B cell (primary cell): ENCODE measurements at regions of chr12 and their contacts with region 1.

Region 1: DNA sequence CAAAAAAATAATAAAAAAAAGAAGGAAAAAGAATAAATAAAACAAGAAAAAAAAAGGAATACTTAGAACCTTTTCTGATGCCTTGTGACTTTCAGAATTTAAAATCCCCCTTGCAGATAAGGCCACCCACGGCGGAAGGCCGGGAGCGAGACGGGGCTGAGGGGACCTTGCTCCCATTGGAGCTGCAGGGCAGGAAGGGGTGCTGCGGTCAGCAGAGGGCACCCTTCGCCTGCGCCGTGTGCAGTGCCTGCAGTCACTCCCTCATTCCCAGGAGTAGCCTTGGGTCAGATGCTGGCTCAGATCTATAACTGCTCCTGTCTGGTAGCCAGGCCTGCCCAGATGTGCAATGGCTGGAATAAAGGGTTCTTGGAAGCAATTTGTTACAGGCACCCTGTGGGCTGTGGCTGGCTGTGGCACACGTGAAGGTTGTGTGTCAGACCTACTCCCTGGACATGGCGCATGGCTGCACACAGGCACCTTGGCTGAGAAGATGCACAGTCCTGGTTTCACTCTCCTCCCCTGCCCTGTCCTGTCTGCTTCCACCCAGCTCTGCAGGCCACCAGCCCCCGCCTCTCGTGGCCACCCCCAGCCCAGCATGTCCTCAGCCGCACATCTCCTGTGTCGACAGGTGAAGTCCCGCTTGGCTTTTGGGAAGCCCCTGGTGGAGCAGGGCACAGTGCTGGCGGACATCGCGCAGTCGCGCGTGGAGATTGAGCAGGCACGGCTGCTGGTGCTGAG is 13.4 kb upstream of the ALDH2 start:
- DNase-seq: peak; percentile 54
- ATAC-seq: peak; percentile 35
- H3K4me3 ChIP-seq: no peak overlapping the region
- H3K4me3 Mint-ChIP-seq: no peak overlapping the region
- H3K27ac ChIP-seq: no peak overlapping the region
- H3K27ac Mint-ChIP-seq: no peak overlapping the region
- H3K4me1 ChIP-seq: peaks cover 11% of the 10 kb centered on the region in 2 donors
- H3K4me1 Mint-ChIP-seq: peaks cover 13% of the 10 kb centered on the region
- H3K27me3 ChIP-seq: no peaks in the 10 kb centered on the region
- H3K27me3 Mint-ChIP-seq: no peaks in the 10 kb centered on the region
- CTCF ChIP-seq: peak; percentile 64

Region 2: DNA sequence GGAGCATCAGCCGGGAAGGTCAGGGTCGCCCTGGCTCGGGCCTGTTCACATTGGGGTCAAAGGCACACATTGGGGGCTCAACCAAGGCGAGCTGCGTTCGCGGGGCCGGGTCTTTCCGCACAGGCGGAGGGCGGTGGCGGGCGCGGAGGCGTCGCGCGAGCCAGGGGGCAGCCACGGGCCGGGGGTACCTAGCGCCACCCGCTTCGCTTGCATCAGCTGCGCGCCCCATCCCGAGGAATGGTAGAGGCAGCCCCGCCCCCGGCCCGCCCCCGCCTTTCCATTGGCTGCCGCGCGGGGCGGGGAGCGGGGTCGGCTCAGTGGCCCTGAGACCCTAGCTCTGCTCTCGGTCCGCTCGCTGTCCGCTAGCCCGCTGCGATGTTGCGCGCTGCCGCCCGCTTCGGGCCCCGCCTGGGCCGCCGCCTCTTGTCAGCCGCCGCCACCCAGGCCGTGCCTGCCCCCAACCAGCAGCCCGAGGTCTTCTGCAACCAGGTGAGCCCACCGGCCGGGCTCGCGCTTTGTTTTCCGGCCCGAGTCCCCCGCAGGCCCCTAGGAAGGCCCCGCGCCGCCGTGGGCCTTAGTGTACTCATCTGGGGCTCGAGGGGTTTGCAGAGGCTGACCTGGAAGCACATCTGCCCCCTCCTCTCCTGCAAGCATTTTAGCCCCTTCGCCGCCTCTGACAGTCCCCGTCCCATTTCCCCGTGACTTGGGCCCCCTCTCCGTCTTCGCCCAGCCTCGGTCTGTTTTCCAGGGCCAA is 13.5 kb after region 1 on chr12 and contains the start of gene ALDH2:
- CTCF ChIA-PET with region 1: interaction called, 56 read pairs
- POLR2A ChIA-PET with region 1: interaction called, 5 read pairs
- intact Hi-C with region 1: no loop called
- DNase-seq: peak; percentile 68
- ATAC-seq: peak; percentile 79
- H3K4me3 ChIP-seq: peak within 1 kb of the TSS; percentile 2 to 74 (median 62)
- H3K4me3 Mint-ChIP-seq: peak within 1 kb of the TSS; percentile 78
- H3K27ac ChIP-seq: peak within 1 kb of the TSS in 1 of 2 donors; percentile 55
- H3K27ac Mint-ChIP-seq: peak within 1 kb of the TSS; percentile 71
- H3K4me1 ChIP-seq: peaks cover 47 to 53% of the 10 kb centered on the region in 2 donors
- H3K4me1 Mint-ChIP-seq: peaks cover 57% of the 10 kb centered on the region
- H3K27me3 ChIP-seq: no peaks in the 10 kb centered on the region
- H3K27me3 Mint-ChIP-seq: no peaks in the 10 kb centered on the region
- CTCF ChIP-seq: no peak
- total RNA-seq, gene ALDH2: 22.3 TPM in 2 replicates

Region 3: DNA sequence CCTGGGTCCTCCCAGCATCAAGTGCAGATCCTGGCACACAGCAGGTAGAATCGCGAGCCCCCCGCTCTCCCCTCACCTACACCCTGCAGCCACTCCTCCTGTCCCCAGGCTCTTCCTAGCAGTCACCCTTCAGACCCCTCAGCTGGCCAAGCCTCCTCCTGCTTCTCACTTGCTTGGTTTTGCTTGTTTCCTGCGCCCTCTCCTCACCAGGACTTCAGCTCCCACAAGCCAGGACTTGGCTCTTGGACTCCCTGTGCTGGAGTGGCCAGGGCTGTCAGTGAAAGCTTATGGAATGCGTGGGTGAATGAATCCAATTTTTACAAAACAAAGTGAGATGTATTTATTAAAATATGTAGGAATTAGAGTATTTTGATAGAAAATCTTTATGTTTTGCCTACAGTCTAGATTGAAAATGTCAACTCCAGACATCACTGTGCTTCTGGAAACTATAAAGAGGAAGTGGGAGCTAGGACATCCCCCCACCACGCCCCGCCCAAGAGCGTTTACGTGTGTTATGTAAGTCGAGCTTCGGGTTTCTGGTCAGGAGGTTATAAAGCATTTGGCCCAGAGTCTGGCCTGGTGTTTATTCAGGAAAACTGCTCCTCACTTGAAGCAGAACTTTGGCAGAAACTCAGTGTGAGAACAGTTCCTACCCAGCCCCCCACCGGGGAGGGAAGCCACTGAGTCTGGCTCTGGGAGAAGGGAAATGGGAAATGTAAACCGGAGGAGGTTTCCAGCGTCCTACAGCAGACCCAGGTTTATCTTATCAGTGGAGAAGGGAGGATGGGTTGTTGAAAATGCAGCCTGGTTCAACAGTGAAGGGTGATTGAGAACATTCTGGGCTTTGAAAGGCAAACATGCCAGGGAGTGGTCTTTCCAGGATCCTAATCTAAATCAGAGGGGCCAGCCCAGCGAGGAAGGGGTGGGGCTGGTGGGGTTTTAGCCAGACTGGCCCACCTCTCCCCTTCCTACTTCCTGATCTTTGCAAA is 22.2 kb after region 1 on chr12:
- CTCF ChIA-PET with region 1: interaction called, 29 read pairs
- POLR2A ChIA-PET with region 1: interaction called, 5 read pairs
- intact Hi-C with region 1: no loop called
- DNase-seq: peak; percentile 92
- ATAC-seq: peak; percentile 93
- H3K4me3 ChIP-seq: peak overlapping the region in 4 of 5 experiments; percentile 3 to 48 (median 26)
- H3K4me3 Mint-ChIP-seq: peak overlapping the region; percentile 80
- H3K27ac ChIP-seq: peak overlapping the region; percentile 94 to 97
- H3K27ac Mint-ChIP-seq: peak overlapping the region; percentile 98
- H3K4me1 ChIP-seq: peaks cover 31 to 32% of the 10 kb centered on the region in 2 donors
- H3K4me1 Mint-ChIP-seq: peaks cover 36% of the 10 kb centered on the region
- H3K27me3 ChIP-seq: no peaks in the 10 kb centered on the region
- H3K27me3 Mint-ChIP-seq: no peaks in the 10 kb centered on the region
- CTCF ChIP-seq: no peak

Region 4: DNA sequence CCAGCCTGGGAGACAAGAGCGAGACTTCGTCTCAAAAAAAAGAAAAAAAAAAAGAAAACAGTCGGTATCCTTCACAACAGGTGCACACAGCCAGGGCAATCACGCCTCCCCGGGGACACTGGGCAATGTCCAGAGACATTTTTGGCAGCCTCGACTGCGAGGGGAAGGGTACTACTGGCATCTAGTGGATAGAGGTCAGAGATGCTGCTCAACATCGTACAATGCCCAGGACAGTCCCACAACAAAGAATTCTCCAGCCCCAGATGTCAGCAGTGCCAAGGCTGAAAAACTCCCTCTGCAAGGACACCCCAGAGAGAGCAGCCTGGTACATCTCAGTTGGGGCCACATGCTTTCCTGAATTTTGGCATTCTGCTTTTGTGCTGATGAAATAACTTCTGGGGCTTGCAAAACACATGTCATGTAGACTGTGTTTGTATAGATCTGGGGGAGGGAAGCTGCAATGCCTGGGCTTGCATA is 34.9 kb after region 1 on chr12:
- CTCF ChIA-PET with region 1: interaction called, 98 read pairs
- POLR2A ChIA-PET with region 1: interaction called, 3 read pairs
- intact Hi-C with region 1: loop called (anchors 1 kb)
- DNase-seq: peak; percentile 40
- ATAC-seq: peak; percentile 62
- H3K4me3 ChIP-seq: no peak overlapping the region
- H3K4me3 Mint-ChIP-seq: no peak overlapping the region
- H3K27ac ChIP-seq: no peak overlapping the region
- H3K27ac Mint-ChIP-seq: no peak overlapping the region
- H3K4me1 ChIP-seq: no peaks in the 10 kb centered on the region
- H3K4me1 Mint-ChIP-seq: no peaks in the 10 kb centered on the region
- H3K27me3 ChIP-seq: no peaks in the 10 kb centered on the region
- H3K27me3 Mint-ChIP-seq: no peaks in the 10 kb centered on the region
- CTCF ChIP-seq: peak; percentile 52

Region 5: GRCh38 chr12:111807232-111807631 is 53.9 kb after region 1 on chr12:
- CTCF ChIA-PET with region 1: interaction called, 248 read pairs
- POLR2A ChIA-PET with region 1: no interaction called
- intact Hi-C with region 1: no loop called
- DNase-seq: no peak
- ATAC-seq: no peak
- H3K4me3 ChIP-seq: no peak overlapping the region
- H3K4me3 Mint-ChIP-seq: no peak overlapping the region
- H3K27ac ChIP-seq: no peak overlapping the region
- H3K27ac Mint-ChIP-seq: no peak overlapping the region
- H3K4me1 ChIP-seq: no peaks in the 10 kb centered on the region
- H3K4me1 Mint-ChIP-seq: no peaks in the 10 kb centered on the region
- H3K27me3 ChIP-seq: no peaks in the 10 kb centered on the region
- H3K27me3 Mint-ChIP-seq: no peaks in the 10 kb centered on the region
- CTCF ChIP-seq: no peak

Region 6: DNA sequence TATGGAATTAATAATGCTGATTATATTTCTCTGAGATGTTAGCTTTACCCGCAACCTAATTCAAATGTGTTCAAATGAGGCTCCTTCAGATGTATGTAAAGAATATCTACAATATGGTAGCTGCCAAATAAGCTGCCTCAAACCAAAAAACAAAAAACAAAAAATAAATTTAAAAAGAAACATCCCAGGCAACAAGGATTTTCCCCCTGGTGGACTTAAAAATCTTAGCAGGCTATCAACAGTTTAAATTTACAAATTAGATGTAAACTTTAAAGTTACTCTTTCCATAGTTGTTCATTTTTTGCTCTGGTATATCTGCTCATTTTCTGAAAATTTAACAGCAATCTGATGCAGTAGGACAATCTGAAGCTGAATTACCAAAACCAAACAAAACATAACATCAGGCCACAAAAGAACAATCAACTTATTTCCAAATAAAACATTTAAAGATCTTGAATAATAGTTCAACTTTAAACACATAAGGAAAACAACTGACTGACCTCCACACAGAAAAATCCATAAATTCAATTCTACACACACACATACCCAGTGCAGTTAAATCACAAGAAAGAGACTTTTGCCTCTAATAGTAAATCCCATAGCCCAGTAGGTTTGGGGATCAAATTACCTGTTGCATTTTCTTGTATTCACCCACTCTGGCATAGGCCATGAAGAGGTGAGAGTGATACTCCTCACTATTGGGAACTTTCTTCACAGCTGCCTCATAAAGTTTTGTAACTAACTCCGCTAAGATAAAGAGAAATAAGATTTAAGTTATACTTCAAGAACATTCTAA is 333.9 kb after region 1 on chr12:
- CTCF ChIA-PET with region 1: no interaction called
- POLR2A ChIA-PET with region 1: no interaction called
- intact Hi-C with region 1: no loop called
- DNase-seq: no peak
- ATAC-seq: no peak
- H3K4me3 ChIP-seq: no peak overlapping the region
- H3K4me3 Mint-ChIP-seq: no peak overlapping the region
- H3K27ac ChIP-seq: no peak overlapping the region
- H3K27ac Mint-ChIP-seq: no peak overlapping the region
- H3K4me1 ChIP-seq: no peaks in the 10 kb centered on the region
- H3K4me1 Mint-ChIP-seq: peaks cover 7% of the 10 kb centered on the region
- H3K27me3 ChIP-seq: no peaks in the 10 kb centered on the region
- H3K27me3 Mint-ChIP-seq: peaks cover 3% of the 10 kb centered on the region
- CTCF ChIP-seq: no peak